BJ (cell line): ENCODE measurements at regions of chrX and their contacts with region 1.

Region 1: DNA sequence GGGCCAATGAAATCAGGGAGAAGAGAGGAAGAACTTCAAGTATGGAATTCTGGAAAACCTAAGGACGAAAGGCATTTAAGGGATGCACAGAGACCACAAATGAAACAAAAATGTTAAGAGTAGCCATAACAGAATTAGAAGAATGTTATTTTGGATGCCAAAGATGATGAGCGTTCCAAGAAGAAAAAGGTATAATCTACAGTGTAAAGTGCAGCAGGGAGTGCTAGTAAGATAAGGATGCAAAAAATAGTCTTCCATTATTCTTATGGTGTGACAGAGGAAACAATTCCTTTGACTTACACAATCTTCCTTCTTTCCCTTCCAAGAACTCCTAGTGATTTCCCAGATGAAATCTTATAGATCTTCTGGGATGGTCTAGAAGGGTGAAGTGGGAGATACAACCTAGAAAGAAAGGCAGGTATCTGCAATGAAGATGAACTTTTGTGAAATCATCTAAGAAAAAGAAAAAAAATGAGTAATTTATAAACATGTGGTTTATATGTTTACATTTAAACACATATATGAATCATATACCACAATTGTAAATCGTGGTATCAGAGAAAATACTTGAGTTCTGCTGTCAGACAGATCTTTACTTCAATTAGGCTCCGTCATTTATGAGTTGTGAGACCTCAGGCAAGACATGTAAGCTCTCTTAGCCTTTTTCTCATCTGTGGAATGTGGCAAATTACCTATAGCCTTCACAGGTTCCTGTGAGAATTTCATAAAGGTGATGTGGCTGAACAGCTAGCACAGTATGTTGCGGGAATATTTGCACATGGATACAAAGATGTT is 8.1 kb downstream of the MORF4L2 start:
- DNase-seq: no peak
- H3K4me3 ChIP-seq: no peak overlapping the region
- H3K27me3 ChIP-seq: no peaks in the 10 kb centered on the region
- CTCF ChIP-seq: no peak

Region 2: DNA sequence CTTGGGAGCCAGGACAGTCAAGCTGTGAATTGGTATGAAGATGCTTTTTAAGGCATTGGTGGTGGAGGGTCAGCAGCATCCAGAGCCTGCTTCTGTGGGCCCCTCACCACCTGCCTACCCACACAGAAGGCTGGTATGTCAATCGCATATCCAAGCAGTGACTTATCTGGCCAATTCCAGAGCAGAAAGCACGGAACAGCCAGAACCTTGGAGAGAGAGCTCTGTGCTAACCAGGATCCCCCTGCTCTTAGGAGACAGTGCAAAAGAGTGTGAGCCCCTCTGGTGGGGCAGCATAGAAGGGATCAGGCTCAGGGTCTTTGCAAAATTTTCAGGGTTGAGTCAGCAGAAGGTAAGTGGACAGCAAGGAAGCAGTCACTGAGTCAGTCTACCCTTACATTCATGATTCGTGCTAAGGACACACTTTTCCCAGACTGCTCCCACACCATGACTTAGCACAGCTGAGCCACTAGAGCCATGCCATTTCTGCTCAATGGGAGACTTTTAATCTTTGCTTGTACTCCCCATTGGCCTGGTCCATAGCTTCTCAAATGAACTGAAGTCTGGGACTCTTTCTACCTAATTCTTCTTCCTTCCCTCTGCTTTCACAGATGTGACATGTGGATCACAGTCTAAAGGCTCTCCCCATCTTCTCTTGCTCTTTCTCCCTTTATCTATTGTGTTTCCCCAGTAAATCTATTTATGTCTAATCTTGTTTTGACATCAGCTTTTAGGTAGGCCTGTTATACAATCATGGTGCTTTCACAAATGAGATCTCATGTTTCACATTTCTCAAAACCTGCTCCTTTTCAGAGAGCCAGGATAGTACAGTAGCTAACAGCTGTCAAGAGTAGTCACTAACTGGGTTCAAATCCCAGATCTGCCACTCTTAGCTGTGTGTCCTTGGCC is 11.9 kb before region 1 on chrX:
- CTCF ChIA-PET with region 1: no interaction called
- POLR2A ChIA-PET with region 1: interaction called, 10 read pairs
- DNase-seq: no peak
- H3K4me3 ChIP-seq: no peak overlapping the region
- H3K27me3 ChIP-seq: no peaks in the 10 kb centered on the region
- CTCF ChIP-seq: no peak

Region 3: GRCh38 chrX:103722505-103722904 is 44.1 kb after region 1 on chrX:
- CTCF ChIA-PET with region 1: no interaction called
- POLR2A ChIA-PET with region 1: no interaction called
- DNase-seq: no peak
- H3K4me3 ChIP-seq: no peak overlapping the region
- H3K27me3 ChIP-seq: no peaks in the 10 kb centered on the region
- CTCF ChIP-seq: no peak